Activated CD8-positive, alpha-beta T cell treated with anti-CD3 and anti-CD28 coated beads, Interleukin-2, amount 10 ng/mL, durations not matched to agents 7 days and 5 days (primary cell): ENCODE measurements at regions of chr18 and their contacts with region 1.

Region 1: DNA sequence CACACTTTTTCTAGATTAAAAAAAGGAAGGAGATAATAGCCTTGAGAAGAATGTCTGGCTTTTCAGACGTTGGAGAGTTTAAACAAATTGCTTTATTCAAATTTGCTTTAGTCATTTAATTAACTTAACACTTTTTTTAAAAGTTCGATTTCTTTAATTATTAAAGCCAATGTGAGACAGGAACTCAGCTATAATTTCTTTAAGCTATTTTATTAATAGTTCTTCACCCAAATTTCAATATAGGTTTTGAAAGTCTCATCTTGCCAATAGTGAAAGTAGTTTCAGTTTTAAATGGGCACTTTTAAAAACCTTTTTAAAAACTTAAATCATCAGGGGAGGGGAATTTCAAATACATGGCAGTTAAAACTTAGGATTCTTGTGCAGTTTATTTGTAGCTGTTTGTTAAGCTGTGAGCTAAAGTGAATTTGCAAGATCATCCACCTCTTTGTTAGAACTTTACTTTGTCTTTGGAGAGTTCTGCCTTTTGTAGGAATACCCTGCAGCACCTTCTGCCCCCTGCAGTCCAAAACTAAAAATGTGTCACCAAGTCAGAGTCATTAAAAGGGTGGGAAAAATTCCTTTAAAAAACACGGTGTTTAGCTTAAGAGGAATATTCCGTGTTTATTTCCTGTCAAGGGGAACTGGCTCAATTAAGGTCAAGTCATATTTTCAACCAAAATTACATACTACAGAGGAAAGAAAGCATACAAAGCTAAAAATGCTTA is 4.6 kb downstream of the TGIF1 start:
- DNase-seq: peak; percentile 62
- ATAC-seq: no peak
- H3K4me3 Mint-ChIP-seq: peak overlapping the region; percentile 88
- H3K27ac Mint-ChIP-seq: peak overlapping the region; percentile 90
- H3K4me1 Mint-ChIP-seq: peaks cover 53% of the 10 kb centered on the region
- H3K27me3 Mint-ChIP-seq: no peaks in the 10 kb centered on the region

Region 2: DNA sequence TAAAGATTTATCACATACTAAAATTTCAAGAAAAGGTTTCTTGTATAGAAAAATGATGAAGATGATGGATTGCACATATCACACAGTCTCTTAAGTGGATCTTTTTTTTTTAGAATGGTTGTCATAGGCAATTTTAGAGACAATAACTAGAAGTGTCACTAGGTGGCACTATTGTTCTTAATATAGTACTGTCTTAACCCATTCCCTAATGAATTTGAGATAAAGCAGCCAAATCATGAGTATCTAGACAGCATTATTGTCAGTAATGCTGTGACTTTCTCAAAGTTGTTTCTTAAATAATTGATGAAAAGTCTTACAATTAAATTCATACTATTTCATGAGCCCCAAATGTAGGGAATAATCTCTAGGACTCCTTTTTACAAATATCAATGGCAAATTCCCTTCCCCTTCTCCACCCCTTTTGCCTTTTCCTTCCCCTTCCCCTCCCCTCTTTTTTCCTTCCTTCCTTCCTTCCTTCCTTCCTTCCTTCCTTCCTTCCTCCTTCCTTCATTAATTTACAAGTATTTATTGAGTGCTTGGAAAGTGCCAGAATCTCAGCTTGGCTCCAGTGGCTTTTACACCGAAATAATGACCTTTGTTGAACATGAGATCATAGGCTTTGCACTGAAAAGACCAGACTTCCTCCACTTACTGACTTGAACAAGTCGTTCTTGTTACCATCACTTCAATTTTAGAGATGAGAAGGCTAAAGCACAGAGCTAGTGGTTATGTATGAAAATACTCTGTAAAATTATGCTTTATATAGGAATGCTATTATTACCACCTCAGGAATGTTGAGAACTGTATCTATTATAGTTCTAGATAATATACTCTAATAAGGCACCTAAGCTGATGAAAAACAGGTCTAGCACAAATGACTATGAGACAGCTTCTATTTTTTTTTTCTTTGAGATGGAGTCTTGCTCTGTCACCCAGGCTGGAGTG is 172.8 kb before region 1 on chr18:
- CTCF ChIA-PET with region 1: interaction called, 35 read pairs
- POLR2A ChIA-PET with region 1: no interaction called
- DNase-seq: no peak
- ATAC-seq: peak; percentile 82
- H3K4me3 Mint-ChIP-seq: no peak overlapping the region
- H3K27ac Mint-ChIP-seq: no peak overlapping the region
- H3K4me1 Mint-ChIP-seq: no peaks in the 10 kb centered on the region
- H3K27me3 Mint-ChIP-seq: peaks cover 5% of the 10 kb centered on the region

Region 3: GRCh38 chr18:3466045-3466444 is 11.5 kb after region 1 on chr18:
- CTCF ChIA-PET with region 1: interaction called, 23 read pairs
- POLR2A ChIA-PET with region 1: interaction called, 5 read pairs
- DNase-seq: no peak
- ATAC-seq: no peak
- H3K4me3 Mint-ChIP-seq: no peak overlapping the region
- H3K27ac Mint-ChIP-seq: no peak overlapping the region
- H3K4me1 Mint-ChIP-seq: peaks cover 10% of the 10 kb centered on the region
- H3K27me3 Mint-ChIP-seq: no peaks in the 10 kb centered on the region

Region 4: DNA sequence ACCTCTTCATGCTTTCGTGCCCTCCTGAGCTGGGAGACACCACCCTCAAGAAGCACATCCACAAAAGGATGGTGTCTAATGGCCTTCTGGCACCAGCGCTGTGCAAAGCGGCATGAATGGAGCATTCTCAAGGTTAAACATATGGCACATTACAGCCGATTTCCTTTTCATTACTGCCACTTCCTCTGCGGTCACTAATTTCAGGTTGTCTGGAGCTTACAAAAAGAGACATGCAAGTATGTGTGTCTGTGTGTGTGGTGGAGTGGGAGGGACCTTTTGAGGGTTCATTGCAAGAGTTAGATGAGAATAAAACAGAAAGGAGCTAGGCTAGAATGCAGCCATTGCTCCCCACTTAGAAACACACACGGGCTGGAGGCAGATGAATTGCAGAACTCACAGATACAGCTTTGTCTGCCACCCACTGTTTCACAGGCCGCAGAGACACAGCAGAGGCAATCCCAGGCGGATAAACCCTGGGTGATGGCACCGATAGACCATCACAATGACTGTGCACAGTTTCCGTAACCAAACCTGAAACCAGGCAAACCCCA is 71.4 kb after region 1 on chr18:
- CTCF ChIA-PET with region 1: interaction called, 12 read pairs
- POLR2A ChIA-PET with region 1: no interaction called
- DNase-seq: peak; percentile 73
- ATAC-seq: peak; percentile 80
- H3K4me3 Mint-ChIP-seq: peak overlapping the region; percentile 55
- H3K27ac Mint-ChIP-seq: peak overlapping the region; percentile 58
- H3K4me1 Mint-ChIP-seq: peaks cover 17% of the 10 kb centered on the region
- H3K27me3 Mint-ChIP-seq: peaks cover 4% of the 10 kb centered on the region

Region 5: DNA sequence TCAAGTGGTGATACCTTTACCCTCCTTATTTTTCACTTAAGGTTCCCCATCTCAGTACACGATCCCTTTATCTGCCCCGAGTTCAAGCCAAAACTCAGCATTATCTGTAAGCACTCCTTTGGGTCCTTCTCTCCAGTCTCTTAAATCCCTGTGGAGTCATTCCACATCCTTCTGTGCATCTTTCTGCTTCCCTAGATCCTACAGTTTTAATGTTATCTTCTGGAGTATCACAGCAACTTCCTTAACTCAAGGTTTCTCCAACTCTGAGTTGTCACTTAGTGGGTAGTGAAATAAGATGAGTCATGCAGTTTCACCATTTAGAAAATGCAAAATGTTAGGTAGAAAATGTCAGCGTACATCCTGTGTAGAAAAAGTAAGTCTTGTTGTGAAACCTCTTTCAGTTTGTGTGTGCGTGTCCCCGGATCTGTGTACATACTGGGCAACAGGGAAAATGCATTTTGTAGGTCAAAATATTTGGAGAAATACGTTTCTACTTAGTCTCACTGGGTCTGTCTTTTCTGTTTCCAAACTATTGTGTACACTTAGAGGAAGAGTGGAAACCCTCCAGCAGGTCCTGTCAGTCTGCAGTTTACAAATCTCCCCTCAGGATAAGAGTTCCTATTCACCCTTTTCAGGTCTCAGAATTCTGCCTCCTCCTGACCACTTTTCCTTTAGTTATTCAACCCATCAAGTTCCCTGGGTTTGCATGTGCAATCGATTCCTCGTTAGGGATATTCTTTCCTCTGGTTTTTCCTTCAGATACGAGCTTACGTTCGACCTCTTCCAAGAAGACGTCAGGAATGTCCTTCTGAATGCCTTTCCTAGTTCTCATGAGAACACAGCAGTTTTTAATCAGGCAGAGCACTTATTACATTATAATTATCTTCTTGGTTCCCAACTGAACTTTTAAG is 150.2 kb after region 1 on chr18:
- CTCF ChIA-PET with region 1: interaction called, 17 read pairs
- POLR2A ChIA-PET with region 1: interaction called, 18 read pairs
- DNase-seq: peak; percentile 52
- ATAC-seq: peak; percentile 71
- H3K4me3 Mint-ChIP-seq: no peak overlapping the region
- H3K27ac Mint-ChIP-seq: no peak overlapping the region
- H3K4me1 Mint-ChIP-seq: peaks cover 27% of the 10 kb centered on the region
- H3K27me3 Mint-ChIP-seq: no peaks in the 10 kb centered on the region